Activated T-helper 2 cell treated with anti-CD3 and anti-CD28 coated beads, Interferon-gamma antibody, Interleukin-2, Interleukin-4, amounts not matched to agents 10 μg/mL and 5 μg/mL and 100 μg/mL, durations not matched to agents 14 hours and 24 hours and 36 hours (primary cell): ENCODE measurements at regions of chr6 and their contacts with region 1.

Region 1: DNA sequence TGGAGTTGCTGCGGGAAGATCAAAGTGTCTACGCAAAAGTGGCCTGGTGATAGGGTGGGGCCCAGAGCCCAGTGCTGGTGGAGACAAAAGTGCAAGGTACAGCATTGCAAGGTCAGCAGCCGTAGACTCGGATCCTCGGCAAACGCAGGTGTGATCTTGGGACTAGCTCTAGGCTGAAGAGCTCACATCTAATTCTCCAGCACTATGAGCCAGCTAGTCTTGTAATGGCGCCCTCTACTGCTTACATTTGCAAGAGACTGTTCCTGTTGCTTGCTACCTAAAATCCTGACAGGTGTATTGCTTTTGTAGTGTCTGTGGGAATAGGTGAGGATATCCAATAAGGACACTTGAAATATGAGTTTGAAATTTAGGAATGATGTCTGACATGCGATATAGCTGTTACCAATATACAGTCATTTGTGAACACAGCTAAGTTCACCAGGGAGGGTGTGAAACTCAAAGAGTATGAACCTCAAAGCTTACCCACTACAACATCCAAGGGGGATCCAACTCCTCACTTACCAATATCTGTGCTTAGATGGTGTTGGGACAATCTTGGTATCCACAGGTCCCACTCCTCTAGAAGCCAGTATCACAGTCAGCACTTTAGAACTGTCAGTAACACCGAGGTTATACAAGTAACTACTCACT is 58.4 kb downstream of the PDE7B start:
- DNase-seq: peak; percentile 51
- H3K4me3 Mint-ChIP-seq: no peak overlapping the region
- H3K27ac Mint-ChIP-seq: no peak overlapping the region
- H3K4me1 Mint-ChIP-seq: peaks cover 47% of the 10 kb centered on the region
- H3K27me3 Mint-ChIP-seq: no peaks in the 10 kb centered on the region

Region 2: DNA sequence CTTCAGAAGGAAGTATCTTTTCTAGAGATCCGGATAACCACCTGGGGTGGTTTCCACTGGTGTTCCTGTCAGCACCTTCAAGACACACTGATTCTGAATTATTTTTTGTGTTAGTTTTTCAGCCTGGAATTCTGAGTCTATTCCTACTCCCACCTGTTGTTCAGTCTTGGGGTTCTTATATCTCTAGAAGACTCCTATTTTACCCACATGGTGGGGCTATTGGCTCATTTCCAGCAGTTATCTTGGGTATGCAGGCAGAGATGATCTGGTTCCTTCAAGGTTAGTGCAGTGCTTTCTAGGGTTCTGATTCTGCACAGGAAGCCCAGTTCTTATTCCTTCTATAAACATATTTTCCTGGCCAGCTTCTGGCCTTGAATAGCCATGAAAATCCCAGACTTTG is 234.0 kb before region 1 on chr6:
- intact Hi-C with region 1: loop called (anchors 2 kb)
- DNase-seq: peak; percentile 17
- H3K4me3 Mint-ChIP-seq: no peak overlapping the region
- H3K27ac Mint-ChIP-seq: peak overlapping the region; percentile 75
- H3K4me1 Mint-ChIP-seq: peaks cover 41% of the 10 kb centered on the region
- H3K27me3 Mint-ChIP-seq: no peaks in the 10 kb centered on the region

Region 3: DNA sequence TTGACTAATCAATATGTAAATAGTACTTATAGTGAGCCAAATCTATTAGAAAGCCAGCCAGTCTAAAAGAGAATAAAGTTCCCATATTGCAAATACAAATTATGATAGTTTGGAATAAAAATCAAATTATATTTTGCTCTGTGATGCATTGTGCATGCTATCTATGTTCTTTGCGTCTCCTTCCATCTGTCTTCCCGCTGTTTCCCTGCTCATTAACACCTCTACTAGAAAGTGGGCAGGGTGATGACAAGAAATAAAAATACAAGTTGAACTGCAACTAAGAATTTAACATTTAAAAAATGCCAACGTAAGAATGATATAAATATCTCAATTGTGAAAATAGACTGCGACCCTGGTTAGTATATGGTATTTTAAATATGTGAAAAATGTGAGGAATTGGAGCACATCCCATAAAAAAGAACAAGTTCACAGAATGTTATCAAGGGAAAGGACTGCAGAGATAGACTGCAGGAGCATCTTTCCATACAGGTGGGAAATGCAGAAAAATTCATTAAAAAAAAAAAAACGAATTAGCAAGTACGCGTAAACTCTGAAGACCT is 216.0 kb before region 1 on chr6:
- intact Hi-C with region 1: loop called (anchors 5 kb)
- DNase-seq: no peak
- H3K4me3 Mint-ChIP-seq: no peak overlapping the region
- H3K27ac Mint-ChIP-seq: no peak overlapping the region
- H3K4me1 Mint-ChIP-seq: peaks cover 36% of the 10 kb centered on the region
- H3K27me3 Mint-ChIP-seq: no peaks in the 10 kb centered on the region

Region 4: GRCh38 chr6:136226027-136226673 is 316.3 kb after region 1 on chr6:
- intact Hi-C with region 1: loop called (anchors 10 kb)
- DNase-seq: peak; percentile 38
- H3K4me3 Mint-ChIP-seq: no peak overlapping the region
- H3K27ac Mint-ChIP-seq: no peak overlapping the region
- H3K4me1 Mint-ChIP-seq: peaks cover 30% of the 10 kb centered on the region
- H3K27me3 Mint-ChIP-seq: no peaks in the 10 kb centered on the region